Body of pancreas (tissue), 4 donors: ENCODE measurements at regions of chr12 and their contacts with region 1.

Region 1: GRCh38 chr12:48795480-48796455 is 6.9 kb upstream of the ADCY6 start:
- DNase-seq: peak; percentile 79 to 87 (median 82)
- ATAC-seq: peak; percentile 92
- H3K4me3 ChIP-seq: no peak overlapping the region
- H3K27ac ChIP-seq: no peak overlapping the region
- H3K4me1 ChIP-seq: peaks cover 13% of the 10 kb centered on the region
- H3K27me3 ChIP-seq: no peaks in the 10 kb centered on the region
- CTCF ChIP-seq: peak; percentile 80 to 99 (median 98)
- POLR2A ChIP-seq: no peak

Region 2: GRCh38 chr12:48758221-48758620 is 37.5 kb before region 1 on chr12:
- intact Hi-C with region 1: loop called (anchors 2 kb)
- DNase-seq: no peak
- ATAC-seq: no peak
- H3K4me3 ChIP-seq: no peak overlapping the region
- H3K27ac ChIP-seq: no peak overlapping the region
- H3K4me1 ChIP-seq: no peaks in the 10 kb centered on the region
- H3K27me3 ChIP-seq: no peaks in the 10 kb centered on the region
- CTCF ChIP-seq: no peak
- POLR2A ChIP-seq: no peak

Region 3: GRCh38 chr12:48936379-48936979 is 140.7 kb after region 1 on chr12:
- intact Hi-C with region 1: no loop called
- DNase-seq: peak; percentile 74 to 85 (median 78)
- ATAC-seq: peak; percentile 79
- H3K4me3 ChIP-seq: no peak overlapping the region
- H3K27ac ChIP-seq: no peak overlapping the region
- H3K4me1 ChIP-seq: no peaks in the 10 kb centered on the region
- H3K27me3 ChIP-seq: no peaks in the 10 kb centered on the region
- CTCF ChIP-seq: peak; percentile 64 to 95 (median 82)
- POLR2A ChIP-seq: no peak